Activated naive CD4-positive, alpha-beta T cell treated with anti-CD3 and anti-CD28 coated beads for 36 hours (primary cell): ENCODE measurements at regions of chr12 and their contacts with region 1.

Region 1: DNA sequence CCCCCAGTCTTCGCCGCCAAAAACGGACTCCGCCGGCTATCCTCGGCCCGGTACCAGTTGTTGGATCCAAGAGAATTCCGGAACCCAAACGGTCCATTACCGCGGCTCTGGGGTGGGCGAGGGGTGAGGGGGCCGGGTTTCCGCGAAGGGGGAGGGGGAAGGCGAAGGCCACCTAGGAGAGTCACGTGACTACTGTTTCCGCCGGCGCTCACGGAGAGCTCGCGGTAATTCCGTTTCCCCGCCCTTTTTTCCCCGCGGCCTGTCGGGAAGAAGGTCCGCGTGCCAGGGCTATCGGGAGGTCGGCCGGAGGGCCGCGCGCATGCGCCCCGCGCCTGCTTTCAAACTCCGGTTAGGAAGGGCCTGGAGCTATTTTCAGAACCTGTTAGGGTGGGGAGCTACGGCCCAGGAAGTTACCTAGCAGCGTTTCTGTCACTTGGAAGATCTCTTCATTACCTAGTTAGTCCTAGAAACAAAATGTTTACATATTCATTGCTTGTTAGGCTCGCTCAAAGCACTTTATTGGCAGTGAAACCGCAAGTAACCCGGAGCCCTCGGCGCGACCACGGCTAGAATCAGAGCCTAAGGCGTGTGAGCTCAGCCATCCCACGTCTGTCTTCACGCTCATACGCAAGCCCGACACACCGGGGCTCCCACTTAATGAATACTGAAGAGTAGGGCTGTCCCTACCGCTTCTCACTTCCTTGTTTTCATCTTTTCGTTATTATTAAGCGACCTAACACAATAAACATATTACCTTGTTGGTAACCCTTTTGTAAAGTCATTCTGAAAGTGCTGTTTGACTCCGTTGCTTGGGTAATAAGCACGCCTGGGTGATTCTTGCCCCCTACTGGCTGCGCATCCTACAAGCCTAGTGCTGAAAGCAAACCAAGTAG is 624 bp upstream of the SBNO1 start:
- DNase-seq: peak; percentile 98
- H3K4me3 Mint-ChIP-seq: peak overlapping the region; percentile 85
- H3K27ac Mint-ChIP-seq: peak overlapping the region; percentile 99
- H3K4me1 Mint-ChIP-seq: peaks cover 24% of the 10 kb centered on the region
- H3K27me3 Mint-ChIP-seq: no peaks in the 10 kb centered on the region

Region 2: GRCh38 chr12:122730215-122731014 is 634.9 kb before region 1 on chr12 and contains the start of gene HCAR1:
- CTCF ChIA-PET with region 1: no interaction called
- intact Hi-C with region 1: no loop called
- DNase-seq: peak; percentile 86
- H3K4me3 Mint-ChIP-seq: peak within 1 kb of the TSS; percentile 58
- H3K27ac Mint-ChIP-seq: peak within 1 kb of the TSS; percentile 89
- H3K4me1 Mint-ChIP-seq: peaks cover 82% of the 10 kb centered on the region
- H3K27me3 Mint-ChIP-seq: no peaks in the 10 kb centered on the region
- total RNA-seq, gene HCAR1: 0.91 to 0.99 TPM

Region 3: DNA sequence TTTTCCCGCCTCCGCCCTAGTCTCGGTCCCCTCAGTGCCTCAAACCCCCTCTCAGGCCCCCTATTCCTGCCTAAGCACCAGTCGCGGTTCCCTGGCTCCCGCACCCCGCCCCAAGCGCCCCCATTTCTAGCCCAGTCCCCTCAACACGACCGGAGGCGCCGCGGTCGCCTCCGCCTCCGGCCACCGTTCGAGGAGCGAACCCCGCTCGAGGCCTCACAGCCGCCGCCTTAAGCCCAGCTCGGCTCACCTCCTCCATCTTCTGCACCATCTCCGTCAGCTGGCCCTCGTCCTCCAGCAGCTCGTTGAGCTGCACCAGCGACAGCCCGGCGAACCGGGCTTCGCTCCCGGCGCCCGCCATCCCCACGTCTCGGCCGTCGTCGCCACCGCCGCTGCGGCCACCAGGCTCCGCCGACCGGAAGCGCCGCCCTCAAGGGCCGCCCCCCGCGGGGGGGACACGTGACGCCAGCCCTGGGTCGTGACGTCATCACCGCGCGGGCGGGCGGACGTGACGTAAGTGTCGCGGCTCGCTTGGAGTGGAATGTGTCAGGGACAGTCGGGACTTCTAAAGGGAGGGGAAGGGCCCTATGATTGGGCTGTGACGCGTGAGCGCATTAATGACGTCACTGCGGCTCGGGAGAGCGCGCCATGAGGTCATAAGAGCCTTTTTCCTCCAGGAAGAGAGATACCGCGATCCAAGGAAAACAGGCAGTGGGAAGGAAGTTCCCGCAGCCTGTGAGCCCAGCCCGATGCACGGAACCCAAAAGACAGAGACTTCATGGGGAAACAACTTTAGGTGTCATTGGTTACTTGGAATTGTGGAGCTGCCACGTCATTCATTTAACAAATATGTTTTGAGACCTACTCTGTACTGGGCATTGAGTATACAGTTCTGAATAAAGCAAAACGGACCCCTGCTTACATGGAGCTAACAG is 469.3 kb before region 1 on chr12 and contains the start of gene VPS37B:
- CTCF ChIA-PET with region 1: no interaction called
- intact Hi-C with region 1: loop called (anchors 1 kb)
- DNase-seq: peak; percentile 92
- H3K4me3 Mint-ChIP-seq: peak within 1 kb of the TSS; percentile 83
- H3K27ac Mint-ChIP-seq: peak within 1 kb of the TSS; percentile 83
- H3K4me1 Mint-ChIP-seq: peaks cover 86% of the 10 kb centered on the region
- H3K27me3 Mint-ChIP-seq: peaks cover 7% of the 10 kb centered on the region
- total RNA-seq, gene VPS37B: 15.6 TPM

Region 4: DNA sequence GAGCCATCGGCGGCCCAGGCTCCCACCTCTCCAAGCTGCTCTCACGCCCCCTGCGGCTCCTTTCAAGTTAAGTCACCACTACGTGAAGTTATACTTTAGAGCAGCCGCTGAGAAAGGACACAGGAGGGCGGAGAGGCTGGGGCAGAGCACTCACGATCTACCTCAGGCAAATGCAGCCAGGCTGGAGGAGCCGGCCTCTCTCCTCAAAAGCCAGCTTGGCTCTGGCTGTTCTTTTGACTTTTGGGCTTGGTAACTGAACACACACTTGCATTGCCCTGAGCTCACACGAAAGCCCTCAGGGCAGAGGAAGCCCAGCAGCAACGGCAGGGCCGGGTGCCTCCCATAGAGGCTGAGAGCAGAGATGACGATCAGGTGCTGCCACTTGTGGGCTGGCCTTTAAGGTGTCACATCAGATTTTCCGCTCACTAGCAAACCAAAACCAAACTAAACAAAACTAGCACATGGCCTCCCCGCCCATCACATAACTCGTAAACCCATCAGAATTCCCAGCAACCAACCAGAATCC is 289.6 kb before region 1 on chr12:
- CTCF ChIA-PET with region 1: no interaction called
- intact Hi-C with region 1: loop called (anchors 1 kb)
- DNase-seq: peak; percentile 90
- H3K4me3 Mint-ChIP-seq: peak overlapping the region; percentile 67
- H3K27ac Mint-ChIP-seq: peak overlapping the region; percentile 93
- H3K4me1 Mint-ChIP-seq: peaks cover 44% of the 10 kb centered on the region
- H3K27me3 Mint-ChIP-seq: no peaks in the 10 kb centered on the region

Region 5: GRCh38 chr12:123253658-123254459 is 111.4 kb before region 1 on chr12:
- CTCF ChIA-PET with region 1: no interaction called
- intact Hi-C with region 1: no loop called
- DNase-seq: no peak
- H3K4me3 Mint-ChIP-seq: no peak overlapping the region
- H3K27ac Mint-ChIP-seq: peak overlapping the region; percentile 56
- H3K4me1 Mint-ChIP-seq: peaks cover 46% of the 10 kb centered on the region
- H3K27me3 Mint-ChIP-seq: no peaks in the 10 kb centered on the region

Region 6: DNA sequence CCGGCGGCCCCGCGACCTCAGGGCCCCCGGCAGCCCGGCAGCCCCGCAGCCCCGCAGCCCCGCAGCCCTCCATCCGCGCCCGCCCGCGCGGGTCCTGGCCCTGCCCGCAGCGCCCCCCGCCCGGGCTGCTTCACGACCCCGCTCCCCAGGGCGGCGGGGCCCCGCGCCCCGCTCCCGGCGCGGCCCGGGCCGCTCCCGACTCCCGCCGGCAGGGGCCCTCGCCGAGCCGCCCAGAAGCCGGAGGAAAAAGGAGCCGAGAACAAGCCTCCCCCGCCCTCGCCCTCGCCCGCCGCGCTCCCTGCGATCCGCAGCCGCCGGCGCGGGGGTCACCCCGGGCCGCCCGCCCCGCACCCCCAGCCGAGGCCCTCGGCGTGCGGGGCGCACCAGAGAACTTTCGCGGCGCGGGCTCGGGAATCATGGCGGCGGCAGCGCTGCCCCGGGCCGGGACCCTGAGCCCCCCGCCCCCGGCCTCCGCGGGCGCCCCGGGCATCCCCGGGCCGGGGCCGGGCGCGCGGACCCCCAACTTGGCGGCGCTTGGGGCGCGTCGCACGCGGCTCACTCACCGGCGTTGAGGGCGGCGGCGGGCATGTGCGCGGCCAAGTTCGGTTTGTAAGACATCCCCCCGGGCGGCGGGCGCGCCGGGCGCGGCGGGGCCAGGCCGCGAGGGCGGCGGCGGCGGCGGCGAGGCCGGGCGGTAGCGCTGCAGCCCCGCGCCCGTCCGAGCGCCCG is 94.1 kb before region 1 on chr12:
- CTCF ChIA-PET with region 1: interaction called, 4 read pairs
- intact Hi-C with region 1: loop called (anchors 1 kb)
- DNase-seq: peak; percentile 81
- H3K4me3 Mint-ChIP-seq: no peak overlapping the region
- H3K27ac Mint-ChIP-seq: no peak overlapping the region
- H3K4me1 Mint-ChIP-seq: peaks cover 23% of the 10 kb centered on the region
- H3K27me3 Mint-ChIP-seq: no peaks in the 10 kb centered on the region

Region 7: GRCh38 chr12:123436017-123436964 is 71.0 kb after region 1 on chr12 and contains the start of gene RILPL2:
- CTCF ChIA-PET with region 1: no interaction called
- intact Hi-C with region 1: loop called (anchors 1 kb)
- DNase-seq: peak; percentile 97
- H3K4me3 Mint-ChIP-seq: peak within 1 kb of the TSS; percentile 92
- H3K27ac Mint-ChIP-seq: peak within 1 kb of the TSS; percentile 93
- H3K4me1 Mint-ChIP-seq: peaks cover 43% of the 10 kb centered on the region
- H3K27me3 Mint-ChIP-seq: no peaks in the 10 kb centered on the region
- total RNA-seq, gene RILPL2: 8.1 to 9.1 TPM

Region 8: GRCh38 chr12:123601602-123602489 is 236.6 kb after region 1 on chr12 and contains the start of gene DDX55:
- CTCF ChIA-PET with region 1: interaction called, 3 read pairs
- intact Hi-C with region 1: loop called (anchors 1 kb)
- DNase-seq: peak; percentile 87
- H3K4me3 Mint-ChIP-seq: peak within 1 kb of the TSS; percentile 89
- H3K27ac Mint-ChIP-seq: peak within 1 kb of the TSS; percentile 94
- H3K4me1 Mint-ChIP-seq: peaks cover 45% of the 10 kb centered on the region
- H3K27me3 Mint-ChIP-seq: no peaks in the 10 kb centered on the region
- total RNA-seq, gene DDX55: 44.8 to 48.7 TPM

Region 9: GRCh38 chr12:124006085-124006845 is 641.0 kb after region 1 on chr12:
- CTCF ChIA-PET with region 1: no interaction called
- intact Hi-C with region 1: loop called (anchors 10 kb)
- DNase-seq: peak; percentile 70
- H3K4me3 Mint-ChIP-seq: peak overlapping the region; percentile 30
- H3K27ac Mint-ChIP-seq: peak overlapping the region; percentile 19
- H3K4me1 Mint-ChIP-seq: peaks cover 32% of the 10 kb centered on the region
- H3K27me3 Mint-ChIP-seq: no peaks in the 10 kb centered on the region